Kidney (tissue), 22 donors: ENCODE measurements at regions of chr5 and their contacts with region 1.

Region 1: DNA sequence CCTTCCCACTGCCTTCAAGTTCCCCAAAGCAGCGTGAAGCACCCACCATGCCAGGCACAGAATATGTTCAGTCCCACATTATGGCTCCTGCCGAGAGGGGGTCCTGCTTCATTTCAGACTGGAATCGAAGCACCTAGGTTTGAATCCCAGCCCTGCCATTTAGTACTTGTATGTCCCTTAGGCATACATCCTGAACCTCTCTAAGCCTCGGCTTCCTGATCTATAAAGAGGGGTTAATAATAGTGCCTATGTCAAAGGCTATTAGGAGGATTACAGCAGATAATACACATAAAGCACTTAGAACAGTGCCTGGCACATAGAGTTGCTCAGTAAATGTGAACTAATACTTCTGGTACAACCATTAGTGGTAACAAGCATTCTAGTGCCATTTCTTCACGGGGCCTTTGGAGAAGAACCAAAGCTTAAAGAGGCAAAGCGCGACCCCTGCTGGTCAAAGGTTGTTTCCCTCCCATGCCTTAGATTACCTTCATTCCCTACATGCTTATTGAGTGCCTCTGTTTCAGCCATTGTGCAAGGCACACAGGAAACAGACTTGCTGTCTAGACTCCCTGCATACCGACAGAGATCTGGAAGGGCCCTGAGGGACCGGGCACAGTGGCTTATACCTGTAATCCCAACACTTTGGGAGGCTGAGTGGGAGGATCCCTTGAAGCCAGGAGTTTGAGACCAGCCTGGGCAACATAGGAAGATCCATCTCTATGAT is 98.2 kb downstream of the PPARGC1B start:
- DNase-seq: peak; percentile 89 to 94 (median 90)
- H3K4me3 ChIP-seq: no peak overlapping the region
- H3K27ac ChIP-seq: no peak overlapping the region
- H3K4me1 ChIP-seq: peaks cover 0 to 9% (median 5%) of the 10 kb centered on the region in 3 donors
- H3K27me3 ChIP-seq: no peaks in the 10 kb centered on the region
- CTCF ChIP-seq: peak; percentile 88

Region 2: GRCh38 chr5:149381987-149382340 is 446.4 kb before region 1 on chr5:
- intact Hi-C with region 1: no loop called
- DNase-seq: peak; percentile 84 to 90 (median 90)
- H3K4me3 ChIP-seq: no peak overlapping the region
- H3K27ac ChIP-seq: peak overlapping the region; percentile 53 to 79
- H3K4me1 ChIP-seq: peaks cover 0 to 10% (median 9%) of the 10 kb centered on the region in 3 donors
- H3K27me3 ChIP-seq: no peaks in the 10 kb centered on the region
- CTCF ChIP-seq: peak; percentile 93

Region 3: GRCh38 chr5:149406203-149406978 is 421.9 kb before region 1 on chr5:
- intact Hi-C with region 1: no loop called
- DNase-seq: peak in 4 of 5 donors; percentile 64 to 95 (median 79)
- H3K4me3 ChIP-seq: peak overlapping the region; percentile 63 to 73 (median 73)
- H3K27ac ChIP-seq: peak overlapping the region; percentile 78 to 79
- H3K4me1 ChIP-seq: peaks cover 0 to 15% (median 3%) of the 10 kb centered on the region in 3 donors
- H3K27me3 ChIP-seq: no peaks in the 10 kb centered on the region
- CTCF ChIP-seq: no peak

Region 4: GRCh38 chr5:149636851-149637246 is 191.5 kb before region 1 on chr5:
- intact Hi-C with region 1: loop called (anchors 5 kb)
- DNase-seq: peak; percentile 79 to 92 (median 84)
- H3K4me3 ChIP-seq: no peak overlapping the region
- H3K27ac ChIP-seq: no peak overlapping the region
- H3K4me1 ChIP-seq: peaks cover 0 to 18% (median 7%) of the 10 kb centered on the region in 3 donors
- H3K27me3 ChIP-seq: no peaks in the 10 kb centered on the region
- CTCF ChIP-seq: peak; percentile 95

Region 5: GRCh38 chr5:149938791-149939358 is 110.6 kb after region 1 on chr5:
- intact Hi-C with region 1: no loop called
- DNase-seq: no peak
- H3K4me3 ChIP-seq: no peak overlapping the region
- H3K27ac ChIP-seq: no peak overlapping the region
- H3K4me1 ChIP-seq: peaks cover 0 to 6% (median 2%) of the 10 kb centered on the region in 3 donors
- H3K27me3 ChIP-seq: no peaks in the 10 kb centered on the region
- CTCF ChIP-seq: no peak